A549 (cell line): ENCODE measurements at regions of chr11 and their contacts with region 1.

Region 1: DNA sequence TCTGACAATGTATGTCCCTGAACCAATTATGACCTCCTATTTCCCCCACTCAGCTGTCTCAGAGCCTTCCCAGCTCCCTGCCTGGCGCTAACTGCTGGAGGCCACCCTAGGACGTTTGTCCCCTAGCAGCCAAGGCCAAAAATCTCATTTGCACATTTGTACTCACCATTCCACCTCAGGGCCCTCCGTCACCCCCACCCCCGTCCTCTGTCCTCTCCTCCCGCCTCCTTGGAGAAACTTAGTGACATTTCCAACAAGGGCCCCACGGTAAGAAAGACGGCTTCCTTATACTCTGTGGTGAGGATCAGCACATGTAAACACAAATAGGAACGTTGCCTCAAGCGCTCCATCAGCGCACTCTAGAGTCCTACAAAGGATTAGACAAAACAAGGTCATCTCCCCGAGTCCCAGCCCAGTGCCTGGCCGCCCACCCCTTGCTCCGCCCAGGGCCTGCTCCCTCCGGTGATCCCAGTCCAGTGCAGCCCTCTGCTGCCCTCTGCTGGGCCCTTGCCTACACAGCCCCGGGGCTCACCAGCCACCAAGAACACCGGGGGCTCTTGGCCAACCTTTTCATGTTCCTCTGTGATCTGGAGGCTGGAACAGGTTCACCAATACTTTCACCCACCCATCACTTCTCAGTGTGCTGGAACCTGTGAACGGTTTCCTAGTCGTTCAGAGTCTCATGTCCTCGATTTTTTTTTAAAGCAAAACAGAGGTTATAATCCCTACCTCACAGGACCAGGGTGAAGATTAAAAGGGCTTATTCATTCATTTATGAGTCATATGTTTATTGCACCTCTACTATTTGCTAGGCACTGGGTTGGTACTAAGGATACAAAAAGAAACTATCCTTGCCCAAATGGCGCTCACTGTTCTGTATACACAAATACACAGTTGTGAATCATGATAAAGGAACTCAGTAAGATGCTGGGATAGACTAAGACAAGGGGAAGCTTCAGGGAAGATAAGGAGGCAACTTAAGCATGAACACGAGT is 15.3 kb upstream of the CTR9 start:
- DNase-seq: peak; percentile 93 to 97
- ATAC-seq: peak; percentile 98 to 99
- H3K4me3 ChIP-seq: peak overlapping the region; percentile 27
- H3K27ac ChIP-seq: peak overlapping the region; percentile 77 to 88
- H3K4me1 ChIP-seq: peaks cover 13% of the 10 kb centered on the region
- CTCF ChIP-seq: peak; percentile 99
- EP300 ChIP-seq: no peak
- POLR2A ChIP-seq: no peak
- RAD21 ChIP-seq: peak; percentile 98 to 100

Region 2: DNA sequence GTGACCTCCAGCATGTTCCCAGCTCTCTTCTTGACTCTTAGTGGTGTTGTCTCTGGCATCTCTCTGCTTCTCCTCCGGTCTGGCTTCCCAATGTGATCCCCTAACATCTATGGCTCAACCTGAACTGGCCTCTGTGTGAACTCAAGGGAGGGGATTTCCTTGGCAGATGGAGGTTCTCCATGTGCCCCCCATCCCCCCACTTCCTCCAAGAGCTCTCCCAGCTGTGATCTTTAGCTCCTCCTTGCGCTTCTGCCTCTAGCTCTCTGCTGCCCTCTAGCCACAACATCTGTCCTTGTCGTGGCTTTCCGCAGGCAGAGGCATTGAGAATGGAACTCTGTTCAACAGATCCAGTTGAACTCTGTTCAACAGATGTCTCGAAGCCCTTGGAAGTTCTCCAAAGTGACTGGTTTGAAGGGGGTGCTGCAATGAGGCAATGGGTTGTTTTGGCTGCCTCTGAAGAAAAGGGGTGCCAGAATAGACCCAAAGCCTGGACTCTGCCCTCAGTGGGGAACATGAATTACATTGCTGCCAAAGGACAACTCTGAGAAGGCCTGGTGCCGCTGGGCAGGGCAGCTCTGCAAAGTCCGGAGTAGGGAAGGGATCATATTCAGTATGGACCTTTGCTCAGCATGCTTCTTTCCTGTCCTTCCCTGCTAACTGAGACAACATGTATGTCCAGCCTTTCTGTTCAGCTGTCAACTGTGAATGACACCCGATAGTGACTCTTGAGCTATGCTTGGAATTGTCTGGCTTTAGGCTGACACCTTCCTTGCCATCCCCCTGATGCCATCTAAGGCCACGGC is 369.0 kb before region 1 on chr11:
- CTCF ChIA-PET with region 1: interaction called, 11 read pairs
- POLR2A ChIA-PET with region 1: no interaction called
- DNase-seq: peak; percentile 78 to 96
- ATAC-seq: peak; percentile 97 to 98
- H3K4me3 ChIP-seq: no peak overlapping the region
- H3K27ac ChIP-seq: peak overlapping the region; percentile 78 to 84
- H3K4me1 ChIP-seq: peaks cover 15% of the 10 kb centered on the region
- CTCF ChIP-seq: peak; percentile 86
- EP300 ChIP-seq: peak in 1 of 2 experiments; percentile 42; a peak in 1 of 5 replicates
- POLR2A ChIP-seq: no peak
- RAD21 ChIP-seq: peak; percentile 91 to 96

Region 3: DNA sequence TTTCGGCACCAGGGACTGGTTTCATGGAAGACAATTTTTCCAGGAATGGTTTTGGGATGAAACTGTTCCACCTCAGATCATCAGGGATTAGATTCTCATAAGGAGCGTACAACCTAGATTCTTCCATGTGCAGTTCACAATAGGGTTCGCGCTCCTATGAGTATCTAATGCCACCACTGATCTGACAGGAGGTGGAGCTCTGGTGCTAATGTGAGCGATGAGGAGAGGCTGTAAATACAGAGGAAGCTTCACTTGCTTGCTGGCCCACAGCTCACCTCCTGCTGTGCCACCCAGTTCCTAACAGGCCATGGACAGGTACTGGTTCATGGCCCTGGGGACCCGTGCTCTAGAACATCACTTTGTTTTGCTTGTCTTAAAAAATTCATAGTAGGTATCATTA is 322.5 kb before region 1 on chr11:
- CTCF ChIA-PET with region 1: interaction called, 20 read pairs
- POLR2A ChIA-PET with region 1: no interaction called
- DNase-seq: peak in 1 of 2 experiments; percentile 62
- ATAC-seq: peak; percentile 59 to 87; a peak in 4 of 6 replicates
- H3K4me3 ChIP-seq: no peak overlapping the region
- H3K27ac ChIP-seq: no peak overlapping the region; a peak in 1 of 6 replicates
- H3K4me1 ChIP-seq: no peaks in the 10 kb centered on the region; the same call in 2 of the 3 replicates
- CTCF ChIP-seq: peak; percentile 25; the same call in 2 of the 3 replicates
- EP300 ChIP-seq: no peak
- POLR2A ChIP-seq: no peak
- RAD21 ChIP-seq: peak; percentile 59 to 63

Region 4: DNA sequence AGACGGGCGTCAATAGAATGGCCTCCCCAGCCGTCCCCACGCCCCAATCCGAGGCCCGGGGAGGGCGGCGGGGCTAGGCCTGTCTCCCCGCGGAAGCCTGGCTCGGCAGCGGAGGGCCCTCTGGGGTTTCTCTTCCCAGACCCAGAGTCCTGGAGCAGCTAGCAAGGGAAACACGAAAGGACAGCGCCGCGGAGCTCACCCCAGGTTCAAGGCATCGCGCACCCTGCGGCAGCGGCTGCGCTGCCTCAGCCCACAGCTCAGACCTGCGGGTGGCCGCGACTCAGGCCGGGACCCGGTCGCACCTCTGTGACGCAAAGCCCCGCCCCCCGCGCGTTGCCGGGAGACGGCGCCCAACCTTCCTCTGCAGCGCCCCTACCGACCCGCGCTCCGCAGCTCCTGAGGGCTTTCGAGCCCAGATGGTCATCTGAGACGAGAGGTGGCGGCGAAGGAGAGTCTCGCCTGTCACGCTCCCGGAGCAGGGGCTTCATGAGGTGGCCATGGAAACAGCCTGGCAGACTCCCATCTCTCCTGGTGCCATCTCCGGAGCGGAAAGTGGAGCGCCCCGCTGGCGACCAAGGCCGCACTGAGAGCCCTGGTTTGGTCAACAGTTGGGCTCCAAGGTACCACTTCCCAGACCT is 194.7 kb before region 1 on chr11 and contains the start of gene RNF141:
- CTCF ChIA-PET with region 1: interaction called, 14 read pairs
- POLR2A ChIA-PET with region 1: interaction called, 3 read pairs
- DNase-seq: peak; percentile 84 to 92
- ATAC-seq: peak; percentile 95 to 97
- H3K4me3 ChIP-seq: peak within 1 kb of the TSS; percentile 75
- H3K27ac ChIP-seq: peak within 1 kb of the TSS; percentile 85 to 87
- H3K4me1 ChIP-seq: peaks cover 15% of the 10 kb centered on the region
- CTCF ChIP-seq: peak; percentile 74
- EP300 ChIP-seq: no peak
- POLR2A ChIP-seq: peak; percentile 97
- RAD21 ChIP-seq: peak; percentile 37 to 56; a peak in 4 of 5 replicates
- polyA plus RNA-seq, gene RNF141: 21.6 and 33.3 TPM in 2 replicates

Region 5: DNA sequence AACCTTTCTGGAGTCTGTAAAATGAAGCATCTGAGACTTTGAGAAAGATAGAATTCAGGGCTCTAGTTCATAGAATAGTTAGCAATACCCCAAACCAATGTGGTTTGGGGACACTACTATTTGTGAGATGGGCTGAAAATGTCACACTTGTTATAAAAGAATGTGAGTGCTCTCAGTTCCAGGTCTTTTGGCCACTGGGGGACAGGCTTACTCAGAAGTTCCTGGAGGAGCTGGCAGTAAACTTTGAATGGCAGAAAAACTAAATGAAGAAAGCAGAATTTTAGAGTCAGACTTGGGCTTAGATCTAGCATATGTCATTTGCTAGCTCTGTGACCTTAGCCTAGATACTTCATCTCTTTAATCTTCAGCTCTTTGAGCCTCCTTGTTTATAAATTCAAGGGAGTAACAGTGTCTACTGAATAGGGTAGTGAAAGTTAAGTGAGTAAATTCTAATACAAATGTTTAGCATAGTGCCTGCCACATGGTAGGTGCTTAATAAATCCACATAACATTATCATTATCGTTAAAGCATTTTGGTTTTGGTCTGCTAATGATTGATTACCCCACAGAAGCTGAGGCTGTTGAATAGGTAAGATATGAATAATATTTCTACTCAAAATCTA is 171.0 kb before region 1 on chr11:
- CTCF ChIA-PET with region 1: no interaction called
- POLR2A ChIA-PET with region 1: no interaction called
- DNase-seq: no peak
- ATAC-seq: peak in 1 of 2 experiments; percentile 34; a peak in 2 of 6 replicates
- H3K4me3 ChIP-seq: no peak overlapping the region
- H3K27ac ChIP-seq: no peak overlapping the region
- H3K4me1 ChIP-seq: peaks cover 14% of the 10 kb centered on the region
- CTCF ChIP-seq: peak; percentile 14; the same call in 1 of the 3 replicates
- EP300 ChIP-seq: no peak
- POLR2A ChIP-seq: no peak
- RAD21 ChIP-seq: no peak; a peak in 1 of 5 replicates

Region 6: GRCh38 chr11:10716574-10717259 is 19.1 kb before region 1 on chr11:
- CTCF ChIA-PET with region 1: interaction called, 10 read pairs
- POLR2A ChIA-PET with region 1: no interaction called
- DNase-seq: no peak
- ATAC-seq: no peak
- H3K4me3 ChIP-seq: no peak overlapping the region
- H3K27ac ChIP-seq: no peak overlapping the region
- H3K4me1 ChIP-seq: no peaks in the 10 kb centered on the region
- CTCF ChIP-seq: no peak
- EP300 ChIP-seq: no peak
- POLR2A ChIP-seq: no peak
- RAD21 ChIP-seq: no peak

Region 7: DNA sequence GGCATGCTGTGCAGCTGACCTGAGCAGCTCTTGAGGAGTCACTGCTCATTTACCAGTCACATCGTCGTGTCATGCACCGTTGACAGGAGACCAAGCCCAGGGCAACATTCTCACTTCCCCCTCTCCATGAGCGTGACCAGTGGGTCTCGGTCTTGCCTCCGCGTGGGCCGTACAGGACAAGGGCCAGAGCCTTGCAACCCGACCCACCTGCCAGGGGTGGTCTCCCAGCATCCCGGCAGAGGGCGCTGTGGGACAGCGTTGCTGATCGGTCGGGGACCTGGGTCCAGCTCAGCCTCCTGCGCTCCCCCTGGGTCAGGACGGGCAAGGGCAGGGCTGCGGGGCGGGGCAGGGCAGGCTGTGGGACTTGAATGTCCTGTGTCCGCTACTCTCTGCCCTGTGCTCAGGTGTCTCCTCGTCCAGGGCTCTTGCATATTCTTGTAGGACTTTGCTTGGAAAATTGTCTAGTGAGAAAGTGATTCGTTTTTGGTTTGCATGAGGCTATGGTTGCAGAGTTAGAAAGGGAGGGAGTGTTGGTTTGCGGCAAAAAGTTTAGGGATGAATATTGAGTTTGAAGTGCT is 56.7 kb after region 1 on chr11:
- CTCF ChIA-PET with region 1: no interaction called
- POLR2A ChIA-PET with region 1: no interaction called
- DNase-seq: peak; percentile 85 to 86
- ATAC-seq: peak; percentile 83 to 94
- H3K4me3 ChIP-seq: no peak overlapping the region
- H3K27ac ChIP-seq: peak overlapping the region; percentile 16 to 68; a peak in 4 of 6 replicates
- H3K4me1 ChIP-seq: peaks cover 16% of the 10 kb centered on the region
- CTCF ChIP-seq: peak; percentile 90
- EP300 ChIP-seq: no peak
- POLR2A ChIP-seq: no peak
- RAD21 ChIP-seq: peak; percentile 97 to 98